ENCODE measurements at regions of chr4 and their contacts with region 1.

Region 1: GRCh38 chr4:183620421-183620820 is 38.6 kb downstream of the RWDD4 start:
- DNase-seq: no peak
- ATAC-seq: no peak
- H3K4me3 ChIP-seq: no peak overlapping the region
- H3K27ac ChIP-seq: no peak overlapping the region
- H3K4me1 ChIP-seq: no peaks in the 10 kb centered on the region
- H3K27me3 ChIP-seq: no peaks in the 10 kb centered on the region
- CTCF ChIP-seq: no peak

Region 2: DNA sequence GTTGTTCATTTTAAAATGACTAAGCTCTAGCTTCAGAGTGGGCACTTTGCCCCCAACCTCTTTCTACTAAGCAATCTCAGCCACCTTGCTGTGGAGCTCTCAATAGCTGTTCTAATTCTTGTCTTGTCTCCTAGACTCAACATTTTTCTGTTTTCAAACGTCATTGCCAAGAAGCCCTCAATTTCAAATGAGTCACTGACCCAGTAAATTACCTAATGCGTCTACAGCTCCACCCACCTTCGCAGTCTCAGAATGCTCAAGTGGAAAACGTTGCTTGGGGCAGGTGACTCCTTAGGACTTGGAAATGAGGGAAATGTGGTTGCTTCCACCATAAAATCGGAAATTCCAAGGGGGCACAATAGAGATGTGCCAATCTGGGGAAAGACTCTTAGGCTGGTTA is 56.5 kb before region 1 on chr4:
- CTCF ChIA-PET with region 1: no interaction called
- POLR2A ChIA-PET with region 1: interaction called, 14 read pairs
- in situ Hi-C with region 1: no loop called
- intact Hi-C with region 1: no loop called
- DNase-seq: no peak
- ATAC-seq: no peak
- H3K4me3 ChIP-seq: no peak overlapping the region
- H3K27ac ChIP-seq: no peak overlapping the region
- H3K4me1 ChIP-seq: no peaks in the 10 kb centered on the region
- H3K27me3 ChIP-seq: no peaks in the 10 kb centered on the region
- CTCF ChIP-seq: no peak

Region 3: DNA sequence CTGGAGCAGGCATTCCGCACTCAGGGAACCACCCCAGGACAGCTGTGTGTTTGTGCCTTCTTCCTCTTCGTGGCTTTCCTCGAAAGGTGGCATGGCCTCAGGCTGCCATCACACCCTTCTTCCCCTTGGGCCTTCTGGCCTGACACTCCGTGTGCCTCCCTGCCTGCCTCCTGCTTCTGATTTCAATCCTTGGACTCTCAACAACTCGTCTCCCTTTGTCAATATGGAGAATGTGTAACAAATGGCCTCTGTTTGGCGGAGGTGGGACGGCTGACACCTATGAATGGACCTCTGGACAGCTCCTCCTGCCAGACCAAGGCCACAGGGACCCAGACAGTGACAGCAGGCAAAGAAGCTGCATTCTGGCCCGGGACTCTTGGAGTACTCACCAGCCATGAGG is 460.3 kb after region 1 on chr4:
- CTCF ChIA-PET with region 1: no interaction called
- POLR2A ChIA-PET with region 1: no interaction called
- in situ Hi-C with region 1: no loop called
- intact Hi-C with region 1: no loop called
- DNase-seq: no peak
- ATAC-seq: no peak
- H3K4me3 ChIP-seq: no peak overlapping the region
- H3K27ac ChIP-seq: no peak overlapping the region
- H3K4me1 ChIP-seq: no peaks in the 10 kb centered on the region
- H3K27me3 ChIP-seq: no peaks in the 10 kb centered on the region
- CTCF ChIP-seq: no peak